HEK293 (cell line): ENCODE measurements at regions of chr15 and their contacts with region 1.

Region 1: GRCh38 chr15:33292717-33293307 is 18.0 kb upstream of the RYR3 start:
- H3K4me3 ChIP-seq: no peak overlapping the region
- H3K27ac ChIP-seq: no peak overlapping the region
- H3K4me1 ChIP-seq: no peaks in the 10 kb centered on the region
- CTCF ChIP-seq: no peak

Region 2: GRCh38 chr15:33194237-33194636 is 98.6 kb before region 1 on chr15:
- CTCF ChIA-PET with region 1: no interaction called
- POLR2A ChIA-PET with region 1: no interaction called
- H3K4me3 ChIP-seq: peak overlapping the region; percentile 11; the same call in 1 of the 2 replicates
- H3K27ac ChIP-seq: no peak overlapping the region
- H3K4me1 ChIP-seq: peaks cover 2% of the 10 kb centered on the region; the same call in 1 of the 2 replicates
- CTCF ChIP-seq: no peak

Region 3: GRCh38 chr15:33322091-33322490 is 29.3 kb after region 1 on chr15:
- CTCF ChIA-PET with region 1: no interaction called
- POLR2A ChIA-PET with region 1: no interaction called
- H3K4me3 ChIP-seq: no peak overlapping the region
- H3K27ac ChIP-seq: no peak overlapping the region
- H3K4me1 ChIP-seq: no peaks in the 10 kb centered on the region
- CTCF ChIP-seq: no peak

Region 4: DNA sequence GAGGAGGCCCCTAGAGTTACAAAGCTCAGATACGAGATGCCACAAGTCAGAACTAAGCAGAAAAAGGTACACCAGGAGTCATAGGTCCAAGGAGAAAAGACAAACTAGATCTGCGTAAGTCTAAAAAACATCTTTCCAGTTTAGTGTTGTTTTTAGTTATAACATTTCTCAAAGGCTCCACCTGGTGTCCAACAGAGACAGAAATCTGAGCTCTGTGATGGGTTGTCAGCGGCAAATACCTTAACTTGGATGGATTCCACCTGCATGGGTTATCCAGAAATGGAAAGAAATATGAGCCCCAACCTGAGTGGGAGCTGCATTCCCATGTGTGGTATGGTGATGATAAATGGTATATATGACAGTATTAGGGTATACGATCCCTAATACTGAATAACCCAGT is 436.8 kb after region 1 on chr15:
- CTCF ChIA-PET with region 1: interaction called, 10 read pairs
- POLR2A ChIA-PET with region 1: no interaction called
- H3K4me3 ChIP-seq: no peak overlapping the region
- H3K27ac ChIP-seq: no peak overlapping the region
- H3K4me1 ChIP-seq: no peaks in the 10 kb centered on the region
- CTCF ChIP-seq: no peak

Region 5: GRCh38 chr15:33737687-33738601 is 445.1 kb after region 1 on chr15:
- CTCF ChIA-PET with region 1: interaction called, 13 read pairs
- POLR2A ChIA-PET with region 1: no interaction called
- H3K4me3 ChIP-seq: no peak overlapping the region
- H3K27ac ChIP-seq: no peak overlapping the region
- H3K4me1 ChIP-seq: no peaks in the 10 kb centered on the region
- CTCF ChIP-seq: peak; percentile 9; the same call in 1 of the 2 replicates